AG04450 (cell line): ENCODE measurements at regions of chr12 and their contacts with region 1.

Region 1: DNA sequence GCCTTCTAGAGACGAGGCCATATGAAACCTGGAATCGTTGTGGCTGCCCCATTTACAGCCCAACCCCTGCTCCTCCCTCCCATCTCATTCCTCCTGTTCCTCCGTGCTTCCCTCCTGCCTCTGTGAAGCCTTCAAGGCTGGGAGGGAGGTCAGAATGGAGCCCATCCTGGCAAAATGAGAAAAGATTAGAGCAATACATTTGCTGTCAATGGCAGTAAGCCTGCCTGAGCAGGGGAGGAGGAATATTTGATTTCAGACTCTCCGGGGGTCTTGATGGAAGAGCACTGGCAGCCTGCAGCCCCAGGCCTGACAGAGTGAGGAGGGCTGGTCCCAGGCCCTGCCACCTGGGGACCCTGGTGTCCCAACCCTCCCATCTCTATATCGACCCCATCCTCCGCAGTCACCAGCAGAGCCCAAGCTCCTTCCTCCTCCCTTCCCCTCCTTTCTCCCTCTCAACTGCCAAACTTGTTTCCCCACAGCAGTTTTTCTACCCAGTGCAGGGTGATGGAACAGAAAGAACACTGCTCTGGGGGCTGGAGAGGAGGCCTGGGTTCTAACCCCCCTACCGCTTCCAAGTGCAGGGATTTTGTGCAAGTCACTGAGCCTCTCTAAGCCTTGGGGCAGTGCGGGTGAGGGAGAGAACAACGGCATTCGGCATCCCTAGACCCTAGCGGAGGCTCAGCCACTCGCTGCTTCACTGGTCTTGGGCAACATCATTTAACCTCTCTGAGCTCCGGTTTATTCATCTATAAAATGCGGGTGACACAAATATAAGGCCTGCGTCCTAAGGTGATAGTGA is 16.0 kb upstream of the RACGAP1 start:
- DNase-seq: no peak
- H3K4me3 ChIP-seq: no peak overlapping the region
- H3K27ac ChIP-seq: no peak overlapping the region
- H3K27me3 ChIP-seq: no peaks in the 10 kb centered on the region
- CTCF ChIP-seq: no peak

Region 2: GRCh38 chr12:49623142-49623904 is 417.9 kb before region 1 on chr12 and contains the start of gene PRPF40B:
- CTCF ChIA-PET with region 1: no interaction called
- POLR2A ChIA-PET with region 1: no interaction called
- DNase-seq: peak; percentile 30
- H3K4me3 ChIP-seq: peak within 1 kb of the TSS; percentile 65
- H3K27ac ChIP-seq: peak within 1 kb of the TSS; percentile 61
- H3K27me3 ChIP-seq: no peaks in the 10 kb centered on the region
- CTCF ChIP-seq: peak; percentile 44
- polyA plus RNA-seq, gene PRPF40B: 9.0 and 10.9 TPM in 2 replicates

Region 3: GRCh38 chr12:49827401-49828099 is 213.7 kb before region 1 on chr12:
- CTCF ChIA-PET with region 1: no interaction called
- POLR2A ChIA-PET with region 1: no interaction called
- DNase-seq: no peak
- H3K4me3 ChIP-seq: peak overlapping the region; percentile 86
- H3K27ac ChIP-seq: peak overlapping the region; percentile 68
- H3K27me3 ChIP-seq: no peaks in the 10 kb centered on the region
- CTCF ChIP-seq: no peak

Region 4: GRCh38 chr12:49983892-49984291 is 57.4 kb before region 1 on chr12:
- CTCF ChIA-PET with region 1: interaction called, 10 read pairs
- POLR2A ChIA-PET with region 1: no interaction called
- DNase-seq: peak; percentile 67
- H3K4me3 ChIP-seq: no peak overlapping the region; the same call in 1 of the 2 replicates
- H3K27ac ChIP-seq: peak overlapping the region; percentile 47
- H3K27me3 ChIP-seq: no peaks in the 10 kb centered on the region
- CTCF ChIP-seq: 0 out of 2 replicates have a peak, but pooled peaks have one; percentile 6

Region 5: DNA sequence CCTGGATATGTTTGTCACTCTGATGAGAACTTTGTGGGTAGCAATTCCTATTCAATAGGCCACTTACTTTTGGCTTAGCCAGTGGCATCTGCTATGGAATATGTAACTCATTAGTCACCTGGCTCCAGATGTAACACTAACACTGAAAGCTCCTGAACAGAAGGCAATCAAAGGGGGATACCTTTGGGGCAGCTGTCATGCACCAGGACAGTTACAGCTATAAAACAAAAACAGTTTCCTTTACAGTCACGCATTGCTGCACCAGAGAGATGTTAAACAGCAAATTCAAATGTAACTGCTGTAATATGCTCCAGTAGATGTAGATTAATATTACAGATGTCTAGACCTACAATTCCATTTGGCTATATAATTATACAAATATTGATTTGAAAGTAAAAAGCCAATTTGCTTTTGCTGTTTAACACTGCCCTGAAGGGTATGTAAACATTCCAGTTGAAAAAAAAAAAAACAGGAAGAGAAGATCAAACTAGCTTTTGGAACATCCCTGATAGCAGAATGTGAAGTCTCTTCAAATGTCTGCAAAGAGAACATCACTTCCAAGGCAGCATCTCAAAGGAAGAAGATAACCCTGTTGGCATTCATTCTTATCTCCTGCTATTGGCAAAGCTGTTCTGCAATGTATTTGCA is 34.3 kb before region 1 on chr12:
- CTCF ChIA-PET with region 1: interaction called, 15 read pairs
- POLR2A ChIA-PET with region 1: no interaction called
- DNase-seq: no peak
- H3K4me3 ChIP-seq: no peak overlapping the region
- H3K27ac ChIP-seq: no peak overlapping the region
- H3K27me3 ChIP-seq: no peaks in the 10 kb centered on the region
- CTCF ChIP-seq: no peak

Region 6: GRCh38 chr12:50016501-50017475 is 24.5 kb before region 1 on chr12:
- CTCF ChIA-PET with region 1: interaction called, 12 read pairs
- POLR2A ChIA-PET with region 1: no interaction called
- DNase-seq: peak; percentile 67
- H3K4me3 ChIP-seq: peak overlapping the region; percentile 36
- H3K27ac ChIP-seq: peak overlapping the region; percentile 41
- H3K27me3 ChIP-seq: no peaks in the 10 kb centered on the region
- CTCF ChIP-seq: no peak

Region 7: DNA sequence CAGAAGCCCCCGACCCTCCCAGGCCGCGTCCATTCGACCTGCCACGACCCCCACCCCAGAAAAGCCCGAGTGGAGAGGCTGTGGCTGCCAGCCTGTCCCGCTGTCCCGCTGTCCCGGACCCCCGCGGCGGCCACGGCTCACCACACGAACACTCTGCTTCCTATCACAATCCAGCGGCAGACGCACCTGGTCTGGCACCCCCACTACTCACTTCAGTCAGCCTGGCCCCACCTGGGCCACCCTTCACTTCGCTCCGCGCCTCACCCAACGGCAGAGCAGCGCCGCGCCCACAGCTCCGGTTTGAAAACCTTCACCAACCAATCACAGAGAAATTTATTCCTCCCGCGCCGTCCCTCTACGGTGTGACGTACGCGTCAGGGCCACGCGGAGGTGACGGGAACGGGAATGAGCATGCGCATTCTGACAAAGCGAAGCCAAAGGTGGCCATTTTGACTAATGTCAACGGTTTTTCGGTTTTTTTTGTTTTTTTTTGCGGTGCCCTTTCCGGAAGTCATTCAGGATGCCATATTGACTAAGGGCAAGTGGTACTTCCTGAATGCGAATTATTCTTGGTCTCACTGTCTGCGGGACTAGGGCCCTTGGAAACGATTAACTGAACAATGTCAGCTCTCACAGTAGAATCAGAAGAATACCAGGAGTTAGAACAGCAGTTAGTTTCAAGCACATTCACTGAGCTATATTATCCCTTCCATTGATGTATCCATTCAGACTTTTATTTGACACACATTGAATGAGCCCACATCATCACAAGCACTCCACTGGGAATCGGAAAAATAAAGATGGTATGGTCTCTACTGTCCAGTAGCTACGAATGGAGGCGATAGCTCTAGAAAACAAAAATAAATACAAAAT is 15.8 kb before region 1 on chr12 and contains the start of gene RACGAP1:
- CTCF ChIA-PET with region 1: interaction called, 22 read pairs
- POLR2A ChIA-PET with region 1: interaction called, 3 read pairs
- DNase-seq: peak; percentile 95
- H3K4me3 ChIP-seq: peak within 1 kb of the TSS; percentile 90
- H3K27ac ChIP-seq: peak within 1 kb of the TSS; percentile 25
- H3K27me3 ChIP-seq: no peaks in the 10 kb centered on the region
- CTCF ChIP-seq: no peak
- polyA plus RNA-seq, gene RACGAP1: 25.6 and 26.2 TPM in 2 replicates

Region 8: GRCh38 chr12:50055831-50056638 is 14.8 kb after region 1 on chr12:
- CTCF ChIA-PET with region 1: interaction called, 37 read pairs
- POLR2A ChIA-PET with region 1: interaction called, 5 read pairs
- DNase-seq: no peak
- H3K4me3 ChIP-seq: no peak overlapping the region
- H3K27ac ChIP-seq: no peak overlapping the region
- H3K27me3 ChIP-seq: peaks cover 32% of the 10 kb centered on the region
- CTCF ChIP-seq: peak; percentile 99

Region 9: DNA sequence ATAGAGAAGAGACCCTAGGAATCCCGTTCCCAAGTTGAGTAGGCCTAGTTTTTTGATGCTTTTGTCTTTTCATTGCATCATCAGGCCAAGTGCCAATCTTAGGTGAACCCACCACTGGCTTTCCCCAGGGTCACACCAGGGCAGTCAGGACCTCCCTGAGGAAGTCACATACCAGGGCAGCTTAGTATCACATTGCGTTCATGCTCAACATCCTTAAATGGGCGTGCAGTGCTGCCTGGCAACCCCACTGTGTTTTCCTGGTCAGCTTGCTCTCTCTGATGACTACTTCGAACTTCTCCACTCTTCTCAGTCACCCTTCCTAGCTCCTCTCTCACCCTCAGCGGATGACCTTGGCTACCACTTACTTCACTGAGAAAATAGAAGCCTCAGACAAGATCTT is 25.2 kb after region 1 on chr12:
- CTCF ChIA-PET with region 1: interaction called, 29 read pairs
- POLR2A ChIA-PET with region 1: interaction called, 3 read pairs
- DNase-seq: peak; percentile 61
- H3K4me3 ChIP-seq: no peak overlapping the region
- H3K27ac ChIP-seq: no peak overlapping the region
- H3K27me3 ChIP-seq: no peaks in the 10 kb centered on the region
- CTCF ChIP-seq: no peak

Region 10: GRCh38 chr12:50257686-50258551 is 216.7 kb after region 1 on chr12:
- CTCF ChIA-PET with region 1: no interaction called
- POLR2A ChIA-PET with region 1: no interaction called
- DNase-seq: no peak
- H3K4me3 ChIP-seq: no peak overlapping the region
- H3K27ac ChIP-seq: no peak overlapping the region
- H3K27me3 ChIP-seq: no peaks in the 10 kb centered on the region
- CTCF ChIP-seq: no peak